Activated naive CD4-positive, alpha-beta T cell treated with anti-CD3 and anti-CD28 coated beads for 36 hours (primary cell): ENCODE measurements at regions of chr7 and their contacts with region 1.

Region 1: DNA sequence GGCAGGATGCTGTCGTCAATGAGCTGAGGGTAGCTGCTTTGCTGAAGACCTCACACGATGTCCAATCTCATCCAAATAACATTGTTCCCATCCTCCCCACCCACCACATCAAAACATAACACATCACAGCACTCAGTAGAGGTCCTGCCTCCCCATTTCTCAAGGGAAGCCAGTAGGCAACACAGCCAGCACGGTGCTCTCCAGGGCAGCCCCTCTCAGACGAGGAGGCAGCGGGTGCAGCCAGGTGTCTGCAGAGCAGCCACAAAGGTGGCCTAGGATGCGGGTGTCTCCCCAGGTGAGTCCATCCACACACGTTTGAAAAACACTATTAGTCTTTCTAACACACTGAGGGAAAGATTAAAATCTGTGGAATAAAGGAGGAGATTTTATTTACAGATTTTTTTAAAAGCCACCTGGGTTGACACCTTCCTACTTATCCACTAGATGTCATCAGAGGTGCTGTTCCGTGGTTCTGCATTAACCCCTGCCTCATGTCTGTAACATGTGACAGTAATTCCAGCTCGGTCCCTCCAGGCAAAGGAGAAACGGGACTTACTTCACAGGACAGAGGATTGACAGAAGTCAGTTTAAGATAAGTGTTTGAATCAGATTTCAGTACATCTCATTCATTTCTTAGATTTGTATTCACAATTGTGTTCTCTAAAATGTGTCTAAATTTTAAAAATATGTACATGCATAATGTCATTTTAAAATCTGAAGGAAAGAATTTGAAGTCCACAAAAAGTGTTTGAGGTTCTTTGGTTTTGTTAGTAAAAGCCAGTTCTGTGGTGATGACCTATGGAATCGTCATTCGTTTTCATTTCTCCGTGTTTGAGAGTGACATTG is 68.0 kb downstream of the LANCL2 start:
- DNase-seq: peak; percentile 56
- H3K4me3 Mint-ChIP-seq: no peak overlapping the region
- H3K27ac Mint-ChIP-seq: no peak overlapping the region
- H3K4me1 Mint-ChIP-seq: peaks cover 37% of the 10 kb centered on the region
- H3K27me3 Mint-ChIP-seq: no peaks in the 10 kb centered on the region

Region 2: DNA sequence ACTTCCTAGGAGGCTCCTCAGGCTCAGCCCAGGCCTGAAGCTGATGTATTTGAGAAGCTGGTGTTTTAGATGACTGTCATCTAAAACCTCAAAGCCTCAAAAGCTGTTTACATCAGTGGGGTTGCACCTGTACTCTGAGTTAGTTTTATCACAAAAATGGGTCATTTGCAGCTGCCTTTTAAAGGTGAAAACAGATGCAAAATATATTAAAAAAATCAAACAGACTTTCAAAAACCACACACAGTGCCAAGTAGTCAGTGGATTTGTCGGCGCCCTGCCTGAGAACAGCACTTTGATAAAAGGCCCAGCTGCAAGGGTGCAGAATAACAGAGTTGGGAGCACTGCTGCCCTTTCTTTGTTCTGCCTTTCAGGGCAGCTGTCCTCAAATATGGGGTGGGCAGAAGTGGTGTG is 36.1 kb after region 1 on chr7:
- CTCF ChIA-PET with region 1: no interaction called
- intact Hi-C with region 1: loop called (anchors 1 kb)
- DNase-seq: peak; percentile 53
- H3K4me3 Mint-ChIP-seq: no peak overlapping the region
- H3K27ac Mint-ChIP-seq: peak overlapping the region; percentile 83
- H3K4me1 Mint-ChIP-seq: peaks cover 72% of the 10 kb centered on the region
- H3K27me3 Mint-ChIP-seq: no peaks in the 10 kb centered on the region

Region 3: GRCh38 chr7:55509322-55509721 is 76.2 kb after region 1 on chr7:
- CTCF ChIA-PET with region 1: interaction called, 5 read pairs
- intact Hi-C with region 1: loop called (anchors 5 kb)
- DNase-seq: peak; percentile 36
- H3K4me3 Mint-ChIP-seq: no peak overlapping the region
- H3K27ac Mint-ChIP-seq: peak overlapping the region; percentile 85
- H3K4me1 Mint-ChIP-seq: peaks cover 89% of the 10 kb centered on the region
- H3K27me3 Mint-ChIP-seq: no peaks in the 10 kb centered on the region

Region 4: GRCh38 chr7:55593515-55594318 is 160.6 kb after region 1 on chr7:
- CTCF ChIA-PET with region 1: interaction called, 20 read pairs
- intact Hi-C with region 1: loop called (anchors 1 kb)
- DNase-seq: peak; percentile 87
- H3K4me3 Mint-ChIP-seq: no peak overlapping the region
- H3K27ac Mint-ChIP-seq: no peak overlapping the region
- H3K4me1 Mint-ChIP-seq: peaks cover 17% of the 10 kb centered on the region
- H3K27me3 Mint-ChIP-seq: peaks cover 2% of the 10 kb centered on the region

Region 5: DNA sequence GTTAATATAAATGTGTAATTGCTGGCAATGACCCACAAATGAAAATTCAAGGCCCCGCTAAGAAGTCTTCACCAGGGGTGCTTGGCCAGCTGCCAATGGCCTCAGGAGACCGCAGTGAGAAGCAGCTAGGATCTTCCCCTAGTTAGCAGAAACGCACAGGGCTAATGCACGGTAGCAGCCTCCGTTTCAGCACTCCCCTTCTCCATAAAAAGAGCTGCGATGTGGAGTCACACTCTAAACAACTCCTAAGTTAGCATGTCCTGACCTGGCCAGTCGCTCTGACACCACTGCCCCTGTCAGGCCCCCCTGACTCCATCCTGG is 290.4 kb after region 1 on chr7:
- CTCF ChIA-PET with region 1: no interaction called
- intact Hi-C with region 1: loop called (anchors 5 kb)
- DNase-seq: no peak
- H3K4me3 Mint-ChIP-seq: no peak overlapping the region
- H3K27ac Mint-ChIP-seq: no peak overlapping the region
- H3K4me1 Mint-ChIP-seq: peaks cover 3% of the 10 kb centered on the region
- H3K27me3 Mint-ChIP-seq: no peaks in the 10 kb centered on the region

Region 6: GRCh38 chr7:55951637-55952351 is 518.6 kb after region 1 on chr7 and contains the start of gene MRPS17:
- CTCF ChIA-PET with region 1: no interaction called
- intact Hi-C with region 1: loop called (anchors 5 kb)
- DNase-seq: peak; percentile 96
- H3K4me3 Mint-ChIP-seq: peak within 1 kb of the TSS; percentile 99
- H3K27ac Mint-ChIP-seq: peak within 1 kb of the TSS; percentile 94
- H3K4me1 Mint-ChIP-seq: peaks cover 28% of the 10 kb centered on the region
- H3K27me3 Mint-ChIP-seq: peaks cover 2% of the 10 kb centered on the region
- total RNA-seq, gene MRPS17: 17.3 to 18.7 TPM

Region 7: GRCh38 chr7:55992346-55992745 is 559.2 kb after region 1 on chr7:
- CTCF ChIA-PET with region 1: no interaction called
- intact Hi-C with region 1: no loop called
- DNase-seq: no peak
- H3K4me3 Mint-ChIP-seq: no peak overlapping the region
- H3K27ac Mint-ChIP-seq: no peak overlapping the region
- H3K4me1 Mint-ChIP-seq: no peaks in the 10 kb centered on the region
- H3K27me3 Mint-ChIP-seq: no peaks in the 10 kb centered on the region